CD4-positive, alpha-beta memory T cell (primary cell): ENCODE measurements at regions of chr2 and their contacts with region 1.

Region 1: GRCh38 chr2:210503001-210503623 is 26.6 kb upstream of the LANCL1 start:
- DNase-seq: peak in 2 of 5 donors; percentile 8 to 11
- H3K4me3 ChIP-seq: no peak overlapping the region
- H3K4me3 Mint-ChIP-seq: peak overlapping the region in 6 of 8 donors; percentile 22 to 73 (median 41)
- H3K27ac ChIP-seq: no peak overlapping the region
- H3K27ac Mint-ChIP-seq: no peak overlapping the region
- H3K4me1 ChIP-seq: no peaks in the 10 kb centered on the region
- H3K4me1 Mint-ChIP-seq: peaks cover 0 to 7% (median 4%) of the 10 kb centered on the region in 4 donors
- H3K27me3 ChIP-seq: no peaks in the 10 kb centered on the region
- H3K27me3 Mint-ChIP-seq: peaks cover 19 to 24% of the 10 kb centered on the region in 2 donors

Region 2: DNA sequence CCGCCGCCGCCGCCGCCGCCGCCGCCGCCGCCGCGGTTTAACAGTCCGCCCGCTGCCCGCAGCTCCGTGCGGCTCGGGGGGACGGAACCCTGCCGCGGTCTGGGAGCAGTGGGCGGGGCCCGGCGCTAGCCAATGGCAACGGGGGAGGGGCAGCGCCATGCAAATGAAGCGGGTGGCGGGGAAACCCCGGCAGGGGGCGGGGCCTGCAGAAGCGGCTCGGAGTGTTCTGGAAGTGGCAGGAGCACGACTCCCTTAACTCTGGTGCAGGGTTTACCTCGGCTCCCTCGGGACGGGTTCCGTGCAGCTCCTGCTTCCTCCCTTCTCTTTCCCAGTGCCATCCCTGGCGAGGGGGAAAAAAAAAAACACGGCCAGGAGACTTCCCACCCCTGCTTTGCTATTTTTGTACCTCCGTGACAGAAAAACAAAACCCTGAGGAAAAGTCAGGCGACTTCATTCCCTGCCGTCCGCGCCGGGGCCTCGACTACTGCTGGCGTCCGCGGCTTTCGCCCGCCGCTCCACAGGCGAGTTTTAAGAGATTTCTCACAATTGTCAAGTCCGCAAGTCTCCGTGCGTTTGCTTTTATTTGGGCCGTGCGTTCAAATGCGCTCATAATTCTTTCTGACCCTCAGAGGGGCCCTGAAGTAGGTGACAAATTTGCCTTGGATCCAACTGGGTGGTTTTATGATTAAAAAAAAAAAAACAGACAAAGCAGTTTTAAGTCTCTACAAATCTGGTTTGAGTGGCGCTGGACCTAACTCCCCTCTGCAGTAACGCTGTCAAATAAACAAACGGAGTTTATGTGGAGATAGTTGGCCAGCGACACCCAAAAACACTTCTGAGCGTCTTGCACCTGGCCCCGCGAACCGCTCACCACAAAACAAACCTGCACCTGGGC is 331.6 kb before region 1 on chr2 and contains the start of gene KANSL1L:
- CTCF ChIA-PET with region 1: no interaction called
- POLR2A ChIA-PET with region 1: no interaction called
- intact Hi-C with region 1: no loop called
- DNase-seq: peak; percentile 92 to 94 (median 93)
- H3K4me3 ChIP-seq: peak within 1 kb of the TSS; percentile 81 to 97
- H3K4me3 Mint-ChIP-seq: peak within 1 kb of the TSS; percentile 96 to 99 (median 98)
- H3K27ac ChIP-seq: peak within 1 kb of the TSS; percentile 65
- H3K27ac Mint-ChIP-seq: peak within 1 kb of the TSS; percentile 96 to 99 (median 98)
- H3K4me1 ChIP-seq: peaks cover 18% of the 10 kb centered on the region
- H3K4me1 Mint-ChIP-seq: peaks cover 9 to 28% (median 18%) of the 10 kb centered on the region in 4 donors
- H3K27me3 ChIP-seq: no peaks in the 10 kb centered on the region
- H3K27me3 Mint-ChIP-seq: peaks cover 0 to 8% of the 10 kb centered on the region in 2 donors
- total RNA-seq, gene KANSL1L: 10.7 to 12.1 TPM

Region 3: DNA sequence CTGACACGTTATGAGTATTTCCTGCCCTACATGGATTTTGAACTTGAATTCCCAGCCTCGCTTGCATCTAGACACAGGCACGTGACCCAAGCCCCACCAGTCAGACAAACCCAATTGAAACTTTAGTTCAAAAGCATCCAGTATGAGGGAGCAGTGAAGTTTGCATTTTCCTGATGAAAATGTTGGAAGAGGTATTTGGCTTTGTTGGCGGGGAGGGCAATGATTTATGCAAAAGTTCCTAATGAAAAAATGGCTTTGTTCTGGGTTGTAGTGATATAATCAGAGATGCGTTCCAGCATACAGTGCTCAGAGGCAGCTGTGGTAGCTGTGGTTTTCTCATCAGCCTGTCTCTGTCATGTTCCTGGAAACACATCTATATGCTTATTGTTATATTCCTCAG is 16.5 kb after region 1 on chr2:
- CTCF ChIA-PET with region 1: interaction called, 13 read pairs
- POLR2A ChIA-PET with region 1: no interaction called
- intact Hi-C with region 1: no loop called
- DNase-seq: no peak
- H3K4me3 ChIP-seq: no peak overlapping the region
- H3K4me3 Mint-ChIP-seq: no peak overlapping the region
- H3K27ac ChIP-seq: no peak overlapping the region
- H3K27ac Mint-ChIP-seq: no peak overlapping the region
- H3K4me1 ChIP-seq: no peaks in the 10 kb centered on the region
- H3K4me1 Mint-ChIP-seq: peaks cover 0 to 5% (median 2%) of the 10 kb centered on the region in 4 donors
- H3K27me3 ChIP-seq: peaks cover 4% of the 10 kb centered on the region
- H3K27me3 Mint-ChIP-seq: peaks cover 7 to 14% of the 10 kb centered on the region in 2 donors

Region 4: GRCh38 chr2:210568108-210568507 is 65.0 kb after region 1 on chr2:
- CTCF ChIA-PET with region 1: no interaction called
- POLR2A ChIA-PET with region 1: no interaction called
- intact Hi-C with region 1: no loop called
- DNase-seq: no peak
- H3K4me3 ChIP-seq: no peak overlapping the region
- H3K4me3 Mint-ChIP-seq: no peak overlapping the region
- H3K27ac ChIP-seq: no peak overlapping the region
- H3K27ac Mint-ChIP-seq: no peak overlapping the region
- H3K4me1 ChIP-seq: no peaks in the 10 kb centered on the region
- H3K4me1 Mint-ChIP-seq: no peaks in the 10 kb centered on the region
- H3K27me3 ChIP-seq: no peaks in the 10 kb centered on the region
- H3K27me3 Mint-ChIP-seq: peaks cover 0 to 3% of the 10 kb centered on the region in 2 donors